ENCODE measurements at regions of chrX and their contacts with region 1.

Region 1: DNA sequence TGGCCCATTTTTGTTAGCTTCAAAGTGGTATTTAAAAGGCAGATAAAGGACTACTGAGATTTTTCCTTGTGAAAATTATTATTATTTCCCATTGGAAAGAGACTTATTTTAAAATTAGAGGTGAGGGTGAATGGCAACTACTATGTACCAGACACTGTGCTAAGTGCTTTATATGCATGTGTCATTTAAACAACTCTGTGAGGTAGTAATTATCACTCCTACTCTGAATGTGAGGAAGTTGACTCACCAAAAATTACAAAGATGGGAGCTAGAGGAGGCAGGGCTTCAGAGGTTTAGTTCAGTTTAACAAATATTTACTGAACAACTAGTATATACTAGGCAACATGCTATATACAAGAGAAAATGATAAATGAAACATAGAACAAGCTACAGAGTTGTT is 78.2 kb downstream of the MSL3 start:
- DNase-seq: no peak
- ATAC-seq: peak; percentile 56
- H3K4me3 ChIP-seq: no peak overlapping the region
- H3K27ac ChIP-seq: no peak overlapping the region
- H3K4me1 ChIP-seq: no peaks in the 10 kb centered on the region
- H3K27me3 ChIP-seq: peaks cover 0 to 2% of the 10 kb centered on the region in 2 experiments; a peak in 1 of 4 replicates
- CTCF ChIP-seq: no peak
- EP300 ChIP-seq: no peak
- POLR2A ChIP-seq: no peak
- RAD21 ChIP-seq: no peak

Region 2: GRCh38 chrX:10769195-10769594 is 1067.1 kb before region 1 on chrX:
- CTCF ChIA-PET with region 1: no interaction called
- POLR2A ChIA-PET with region 1: no interaction called
- RAD21 ChIA-PET with region 1: no interaction called
- SMC1A ChIA-PET with region 1: no interaction called
- in situ Hi-C with region 1: no loop called
- intact Hi-C with region 1: no loop called
- DNase-seq: no peak
- ATAC-seq: peak; percentile 90
- H3K4me3 ChIP-seq: no peak overlapping the region
- H3K27ac ChIP-seq: no peak overlapping the region
- H3K4me1 ChIP-seq: no peaks in the 10 kb centered on the region
- H3K27me3 ChIP-seq: no peaks in the 10 kb centered on the region
- CTCF ChIP-seq: peak; percentile 55 to 56 (median 55)
- EP300 ChIP-seq: no peak
- POLR2A ChIP-seq: no peak
- RAD21 ChIP-seq: peak; percentile 44

Region 3: GRCh38 chrX:11813341-11813740 is 22.9 kb before region 1 on chrX:
- CTCF ChIA-PET with region 1: no interaction called
- POLR2A ChIA-PET with region 1: no interaction called
- RAD21 ChIA-PET with region 1: no interaction called
- SMC1A ChIA-PET with region 1: interaction called, 11 read pairs
- in situ Hi-C with region 1: no loop called
- intact Hi-C with region 1: no loop called
- DNase-seq: no peak
- ATAC-seq: no peak
- H3K4me3 ChIP-seq: no peak overlapping the region
- H3K27ac ChIP-seq: no peak overlapping the region
- H3K4me1 ChIP-seq: no peaks in the 10 kb centered on the region
- H3K27me3 ChIP-seq: no peaks in the 10 kb centered on the region
- CTCF ChIP-seq: no peak
- EP300 ChIP-seq: no peak
- POLR2A ChIP-seq: no peak
- RAD21 ChIP-seq: no peak

Region 4: GRCh38 chrX:11867610-11868345 is 31.5 kb after region 1 on chrX:
- CTCF ChIA-PET with region 1: no interaction called
- POLR2A ChIA-PET with region 1: no interaction called
- RAD21 ChIA-PET with region 1: interaction called, 3 read pairs
- SMC1A ChIA-PET with region 1: interaction called, 3 read pairs
- in situ Hi-C with region 1: no loop called
- intact Hi-C with region 1: loop called (anchors 2 kb)
- DNase-seq: no peak
- ATAC-seq: peak; percentile 81
- H3K4me3 ChIP-seq: no peak overlapping the region
- H3K27ac ChIP-seq: no peak overlapping the region
- H3K4me1 ChIP-seq: no peaks in the 10 kb centered on the region
- H3K27me3 ChIP-seq: no peaks in the 10 kb centered on the region
- CTCF ChIP-seq: no peak
- EP300 ChIP-seq: no peak
- POLR2A ChIP-seq: no peak
- RAD21 ChIP-seq: no peak